Panc1 (cell line): ENCODE measurements at regions of chr2 and their contacts with region 1.

Region 1: GRCh38 chr2:171433763-171434670 is at the starts of genes DCAF17 and METTL8:
- DNase-seq: peak; percentile 81
- ATAC-seq: peak; percentile 98
- H3K4me3 ChIP-seq: peak within 1 kb of the TSS; percentile 95
- H3K27ac ChIP-seq: peak within 1 kb of the TSS; percentile 96
- H3K4me1 ChIP-seq: peaks cover 10% of the 10 kb centered on the region
- H3K27me3 ChIP-seq: no peaks in the 10 kb centered on the region
- CTCF ChIP-seq: peak; percentile 61
- total RNA-seq, gene DCAF17: 19.0 TPM
- total RNA-seq, gene METTL8: 27.7 TPM

Region 2: GRCh38 chr2:170973492-170974303 is 460.3 kb before region 1 on chr2:
- CTCF ChIA-PET with region 1: no interaction called
- POLR2A ChIA-PET with region 1: no interaction called
- in situ Hi-C with region 1: no loop called
- intact Hi-C with region 1: loop called (anchors 5 kb)
- DNase-seq: peak; percentile 47
- ATAC-seq: peak; percentile 95
- H3K4me3 ChIP-seq: peak overlapping the region; percentile 69 to 84
- H3K27ac ChIP-seq: peak overlapping the region; percentile 45
- H3K4me1 ChIP-seq: peaks cover 15% of the 10 kb centered on the region
- H3K27me3 ChIP-seq: no peaks in the 10 kb centered on the region
- CTCF ChIP-seq: peak; percentile 98

Region 3: GRCh38 chr2:170984079-170984478 is 449.9 kb before region 1 on chr2:
- CTCF ChIA-PET with region 1: no interaction called
- POLR2A ChIA-PET with region 1: no interaction called
- in situ Hi-C with region 1: no loop called
- intact Hi-C with region 1: loop called (anchors 5 kb)
- DNase-seq: no peak
- ATAC-seq: peak; percentile 43; the same call in 1 of the 2 replicates
- H3K4me3 ChIP-seq: no peak overlapping the region
- H3K27ac ChIP-seq: no peak overlapping the region
- H3K4me1 ChIP-seq: no peaks in the 10 kb centered on the region
- H3K27me3 ChIP-seq: no peaks in the 10 kb centered on the region
- CTCF ChIP-seq: no peak

Region 4: GRCh38 chr2:171325886-171326585 is 108.0 kb before region 1 on chr2:
- CTCF ChIA-PET with region 1: interaction called, 11 read pairs
- POLR2A ChIA-PET with region 1: no interaction called
- in situ Hi-C with region 1: no loop called
- intact Hi-C with region 1: no loop called
- DNase-seq: no peak
- ATAC-seq: no peak
- H3K4me3 ChIP-seq: no peak overlapping the region
- H3K27ac ChIP-seq: no peak overlapping the region
- H3K4me1 ChIP-seq: no peaks in the 10 kb centered on the region
- H3K27me3 ChIP-seq: no peaks in the 10 kb centered on the region
- CTCF ChIP-seq: no peak

Region 5: GRCh38 chr2:171811245-171811628 is 377.2 kb after region 1 on chr2:
- CTCF ChIA-PET with region 1: no interaction called
- POLR2A ChIA-PET with region 1: no interaction called
- in situ Hi-C with region 1: no loop called
- intact Hi-C with region 1: no loop called
- DNase-seq: peak; percentile 7
- ATAC-seq: peak; percentile 76
- H3K4me3 ChIP-seq: no peak overlapping the region
- H3K27ac ChIP-seq: no peak overlapping the region
- H3K4me1 ChIP-seq: no peaks in the 10 kb centered on the region
- H3K27me3 ChIP-seq: no peaks in the 10 kb centered on the region
- CTCF ChIP-seq: peak; percentile 58; the same call in 1 of the 2 replicates